Naive thymus-derived CD4-positive, alpha-beta T cell (primary cell): ENCODE measurements at regions of chr2 and their contacts with region 1.

Region 1: DNA sequence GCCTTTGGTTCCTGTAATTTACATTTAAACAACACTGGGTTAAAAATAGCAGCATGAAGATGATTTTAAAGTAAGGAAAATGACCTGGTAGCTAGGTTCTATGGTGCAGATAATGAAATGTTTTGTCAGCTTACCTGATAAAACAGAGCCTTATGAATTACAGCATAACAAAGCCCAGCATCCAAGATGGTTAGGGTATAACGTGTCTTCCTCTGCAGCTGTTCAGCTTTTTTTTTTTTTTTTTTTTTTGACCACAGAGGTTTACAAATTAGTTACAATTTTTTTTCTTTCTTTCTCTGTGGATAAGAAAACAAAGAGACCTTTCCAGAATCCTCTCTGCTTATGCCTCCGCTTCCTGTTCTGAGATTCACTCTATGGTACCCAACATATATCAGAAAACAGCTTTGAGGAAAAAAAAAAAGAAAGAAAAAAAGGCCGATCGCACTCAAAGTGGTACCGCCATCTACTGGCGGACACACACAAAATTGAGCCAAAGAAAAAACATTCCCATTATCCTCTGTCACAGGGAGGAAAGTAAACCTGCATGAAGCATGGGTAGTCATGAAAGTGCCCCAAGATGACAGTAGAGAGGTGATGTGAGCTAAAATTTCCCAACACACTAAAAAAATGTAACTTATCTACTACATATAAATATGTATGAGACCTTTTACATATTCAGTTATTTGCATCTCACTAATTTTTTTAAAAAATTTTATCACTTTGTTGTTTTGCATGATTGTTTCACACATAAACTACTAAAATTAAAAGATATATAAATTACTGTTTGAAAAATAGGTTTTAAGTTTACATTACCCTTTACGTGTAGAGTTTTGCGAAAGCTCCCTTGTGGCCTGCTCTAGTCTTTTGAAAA is at the start of gene SCN3A:
- DNase-seq: peak in 2 of 9 donors; percentile 8 to 15
- ATAC-seq: no peak
- H3K4me3 ChIP-seq: no peak within 1 kb of the TSS
- H3K4me3 Mint-ChIP-seq: peak within 1 kb of the TSS in 7 of 10 donors; percentile 19 to 72 (median 55)
- H3K27ac ChIP-seq: no peak within 1 kb of the TSS
- H3K27ac Mint-ChIP-seq: peak within 1 kb of the TSS in 1 of 9 donors; percentile 77
- H3K4me1 ChIP-seq: no peaks in the 10 kb centered on the region
- H3K4me1 Mint-ChIP-seq: peaks cover 0 to 8% (median 3%) of the 10 kb centered on the region in 7 donors
- H3K27me3 ChIP-seq: no peaks in the 10 kb centered on the region
- H3K27me3 Mint-ChIP-seq: peaks cover 0 to 10% (median 4%) of the 10 kb centered on the region in 5 donors
- total RNA-seq, gene SCN3A: 0.02 to 0.64 (median 0.14) TPM in 4 of 5 experiments, not detected in the other

Region 2: DNA sequence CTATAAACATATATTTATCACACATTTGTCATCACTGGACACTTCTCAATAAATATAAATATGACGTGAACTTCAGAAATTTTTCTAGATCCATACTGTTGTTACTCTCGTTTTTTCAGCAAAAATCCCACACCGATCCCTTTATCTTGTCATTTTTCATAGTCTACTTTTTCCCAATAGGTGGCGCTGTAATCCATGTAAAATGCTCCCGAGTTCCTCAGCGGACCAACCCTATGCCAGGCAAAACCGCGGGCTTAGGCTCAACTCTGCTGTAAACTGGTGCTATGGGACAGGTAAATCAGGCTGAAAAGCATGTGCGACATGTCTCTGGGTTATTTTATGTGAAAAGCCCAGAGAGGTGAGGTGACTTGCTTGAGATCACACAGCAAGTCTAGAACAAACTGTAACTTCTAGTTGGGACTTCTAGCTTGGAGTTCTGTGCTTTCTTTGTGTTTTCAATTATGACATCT is 466.3 kb before region 1 on chr2:
- CTCF ChIA-PET with region 1: no interaction called
- POLR2A ChIA-PET with region 1: no interaction called
- intact Hi-C with region 1: loop called in 1 of 2 experiments (anchors 1 kb)
- DNase-seq: peak in 2 of 9 donors; percentile 2 to 21
- ATAC-seq: peak; percentile 60
- H3K4me3 ChIP-seq: no peak overlapping the region
- H3K4me3 Mint-ChIP-seq: no peak overlapping the region
- H3K27ac ChIP-seq: no peak overlapping the region
- H3K27ac Mint-ChIP-seq: no peak overlapping the region
- H3K4me1 ChIP-seq: no peaks in the 10 kb centered on the region
- H3K4me1 Mint-ChIP-seq: no peaks in the 10 kb centered on the region
- H3K27me3 ChIP-seq: no peaks in the 10 kb centered on the region
- H3K27me3 Mint-ChIP-seq: peaks cover 0 to 9% (median 4%) of the 10 kb centered on the region in 5 donors

Region 3: GRCh38 chr2:164992818-164993217 is 211.1 kb before region 1 on chr2:
- CTCF ChIA-PET with region 1: no interaction called
- POLR2A ChIA-PET with region 1: no interaction called
- intact Hi-C with region 1: loop called in 1 of 2 experiments (anchors 1 kb)
- DNase-seq: peak in 7 of 9 donors; percentile 29 to 54 (median 42)
- ATAC-seq: peak; percentile 68
- H3K4me3 ChIP-seq: no peak overlapping the region
- H3K4me3 Mint-ChIP-seq: no peak overlapping the region
- H3K27ac ChIP-seq: no peak overlapping the region
- H3K27ac Mint-ChIP-seq: no peak overlapping the region
- H3K4me1 ChIP-seq: no peaks in the 10 kb centered on the region
- H3K4me1 Mint-ChIP-seq: peaks cover 10 to 36% (median 16%) of the 10 kb centered on the region in 7 donors
- H3K27me3 ChIP-seq: no peaks in the 10 kb centered on the region
- H3K27me3 Mint-ChIP-seq: no peaks in the 10 kb centered on the region